ENCODE measurements at regions of chr11 and their contacts with region 1.

Region 1: DNA sequence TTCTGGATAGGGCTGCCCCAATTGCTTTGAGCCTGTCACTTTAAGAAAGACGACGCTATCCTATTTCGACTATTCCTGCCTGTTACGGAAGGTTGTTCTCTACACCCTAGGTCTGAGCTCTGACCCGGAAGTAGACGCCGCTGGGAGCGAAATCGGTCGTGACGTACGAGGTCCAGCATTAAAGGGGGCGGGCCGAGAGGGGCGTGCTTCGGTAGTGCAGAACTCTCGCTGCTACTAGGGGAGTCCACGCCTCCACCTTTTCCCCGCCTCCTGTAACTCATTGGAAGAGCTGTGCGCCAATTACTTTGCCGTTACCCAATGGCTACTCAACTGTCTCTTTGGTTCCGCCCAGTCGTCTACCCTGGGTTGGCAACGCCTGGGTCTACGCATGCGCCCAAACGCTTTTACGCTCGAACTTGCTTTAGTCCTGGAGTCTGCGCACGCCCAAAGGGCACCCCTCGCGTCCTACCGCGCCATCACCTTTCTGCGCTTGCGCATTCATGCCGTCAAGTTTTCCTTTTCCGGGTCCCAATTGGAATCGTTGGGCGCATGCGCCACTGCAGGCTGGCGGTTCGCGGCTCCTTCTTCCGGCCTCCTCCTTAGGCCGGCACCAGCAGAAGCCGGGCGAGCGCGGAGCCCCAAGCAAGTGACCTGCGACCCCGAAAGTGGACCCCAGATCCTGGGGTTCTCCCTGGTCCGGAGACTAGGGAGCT is at the start of gene PCNX3:
- DNase-seq: peak; percentile 95 to 100 (median 100)
- ATAC-seq: peak; percentile 92
- H3K4me3 ChIP-seq: peak within 1 kb of the TSS; percentile 89
- H3K4me3 Mint-ChIP-seq: peak within 1 kb of the TSS; percentile 94 to 99 (median 97)
- H3K27ac ChIP-seq: peak within 1 kb of the TSS; percentile 98
- H3K27ac Mint-ChIP-seq: peak within 1 kb of the TSS; percentile 90 to 99 (median 97)
- H3K4me1 ChIP-seq: peaks cover 42 to 45% of the 10 kb centered on the region in 2 donors
- H3K4me1 Mint-ChIP-seq: peaks cover 28 to 49% (median 39%) of the 10 kb centered on the region in 7 donors
- H3K27me3 ChIP-seq: no peaks in the 10 kb centered on the region
- H3K27me3 Mint-ChIP-seq: peaks cover 0 to 6% (median 0%) of the 10 kb centered on the region in 5 donors
- total RNA-seq, gene PCNX3: 50.4 to 64.9 (median 56.6) TPM

Region 2: GRCh38 chr11:64846998-64847666 is 768.3 kb before region 1 on chr11:
- CTCF ChIA-PET with region 1: no interaction called
- POLR2A ChIA-PET with region 1: no interaction called
- intact Hi-C with region 1: no loop called
- DNase-seq: peak; percentile 79 to 96 (median 89)
- ATAC-seq: peak; percentile 78
- H3K4me3 ChIP-seq: no peak overlapping the region
- H3K4me3 Mint-ChIP-seq: peak overlapping the region in 7 of 10 donors; percentile 14 to 55 (median 38)
- H3K27ac ChIP-seq: no peak overlapping the region
- H3K27ac Mint-ChIP-seq: peak overlapping the region; percentile 21 to 83 (median 72)
- H3K4me1 ChIP-seq: peaks cover 41 to 59% of the 10 kb centered on the region in 2 donors
- H3K4me1 Mint-ChIP-seq: peaks cover 40 to 68% (median 58%) of the 10 kb centered on the region in 7 donors
- H3K27me3 ChIP-seq: no peaks in the 10 kb centered on the region
- H3K27me3 Mint-ChIP-seq: no peaks in the 10 kb centered on the region

Region 3: GRCh38 chr11:65134386-65135253 is 480.8 kb before region 1 on chr11 and contains the start of gene SYVN1:
- CTCF ChIA-PET with region 1: no interaction called
- POLR2A ChIA-PET with region 1: no interaction called
- intact Hi-C with region 1: loop called (anchors 1 to 2 kb)
- DNase-seq: peak; percentile 88 to 95 (median 93)
- ATAC-seq: peak; percentile 90
- H3K4me3 ChIP-seq: peak within 1 kb of the TSS; percentile 90
- H3K4me3 Mint-ChIP-seq: peak within 1 kb of the TSS; percentile 89 to 100 (median 99)
- H3K27ac ChIP-seq: peak within 1 kb of the TSS; percentile 99
- H3K27ac Mint-ChIP-seq: peak within 1 kb of the TSS; percentile 97 to 100 (median 99)
- H3K4me1 ChIP-seq: peaks cover 10 to 21% of the 10 kb centered on the region in 2 donors
- H3K4me1 Mint-ChIP-seq: peaks cover 31 to 50% (median 40%) of the 10 kb centered on the region in 7 donors
- H3K27me3 ChIP-seq: no peaks in the 10 kb centered on the region
- H3K27me3 Mint-ChIP-seq: no peaks in the 10 kb centered on the region
- total RNA-seq, gene SYVN1: 61.0 to 84.6 (median 67.9) TPM

Region 4: GRCh38 chr11:65524741-65525545 is 90.4 kb before region 1 on chr11 and contains the start of gene SCYL1:
- CTCF ChIA-PET with region 1: no interaction called
- POLR2A ChIA-PET with region 1: interaction called, 27 read pairs
- intact Hi-C with region 1: loop called (anchors 1 kb)
- DNase-seq: peak; percentile 58 to 86 (median 77)
- ATAC-seq: peak; percentile 97
- H3K4me3 ChIP-seq: peak within 1 kb of the TSS; percentile 79
- H3K4me3 Mint-ChIP-seq: peak within 1 kb of the TSS; percentile 86 to 96 (median 90)
- H3K27ac ChIP-seq: peak within 1 kb of the TSS; percentile 96
- H3K27ac Mint-ChIP-seq: peak within 1 kb of the TSS; percentile 89 to 98 (median 95)
- H3K4me1 ChIP-seq: peaks cover 31 to 40% of the 10 kb centered on the region in 2 donors
- H3K4me1 Mint-ChIP-seq: peaks cover 32 to 66% (median 54%) of the 10 kb centered on the region in 7 donors
- H3K27me3 ChIP-seq: no peaks in the 10 kb centered on the region
- H3K27me3 Mint-ChIP-seq: no peaks in the 10 kb centered on the region
- total RNA-seq, gene SCYL1: 63.2 to 79.8 (median 70.4) TPM

Region 5: GRCh38 chr11:65593518-65594298 is 21.7 kb before region 1 on chr11:
- CTCF ChIA-PET with region 1: interaction called, 12 read pairs
- POLR2A ChIA-PET with region 1: interaction called, 6 read pairs
- intact Hi-C with region 1: loop called (anchors 1 to 2 kb)
- DNase-seq: peak in 2 of 9 donors; percentile 35 to 42
- ATAC-seq: peak; percentile 67
- H3K4me3 ChIP-seq: no peak overlapping the region
- H3K4me3 Mint-ChIP-seq: peak overlapping the region in 1 of 10 donors; percentile 9
- H3K27ac ChIP-seq: no peak overlapping the region
- H3K27ac Mint-ChIP-seq: peak overlapping the region in 4 of 9 donors; percentile 25 to 69 (median 40)
- H3K4me1 ChIP-seq: peaks cover 9 to 15% of the 10 kb centered on the region in 2 donors
- H3K4me1 Mint-ChIP-seq: peaks cover 4 to 26% (median 23%) of the 10 kb centered on the region in 7 donors
- H3K27me3 ChIP-seq: no peaks in the 10 kb centered on the region
- H3K27me3 Mint-ChIP-seq: no peaks in the 10 kb centered on the region

Region 6: DNA sequence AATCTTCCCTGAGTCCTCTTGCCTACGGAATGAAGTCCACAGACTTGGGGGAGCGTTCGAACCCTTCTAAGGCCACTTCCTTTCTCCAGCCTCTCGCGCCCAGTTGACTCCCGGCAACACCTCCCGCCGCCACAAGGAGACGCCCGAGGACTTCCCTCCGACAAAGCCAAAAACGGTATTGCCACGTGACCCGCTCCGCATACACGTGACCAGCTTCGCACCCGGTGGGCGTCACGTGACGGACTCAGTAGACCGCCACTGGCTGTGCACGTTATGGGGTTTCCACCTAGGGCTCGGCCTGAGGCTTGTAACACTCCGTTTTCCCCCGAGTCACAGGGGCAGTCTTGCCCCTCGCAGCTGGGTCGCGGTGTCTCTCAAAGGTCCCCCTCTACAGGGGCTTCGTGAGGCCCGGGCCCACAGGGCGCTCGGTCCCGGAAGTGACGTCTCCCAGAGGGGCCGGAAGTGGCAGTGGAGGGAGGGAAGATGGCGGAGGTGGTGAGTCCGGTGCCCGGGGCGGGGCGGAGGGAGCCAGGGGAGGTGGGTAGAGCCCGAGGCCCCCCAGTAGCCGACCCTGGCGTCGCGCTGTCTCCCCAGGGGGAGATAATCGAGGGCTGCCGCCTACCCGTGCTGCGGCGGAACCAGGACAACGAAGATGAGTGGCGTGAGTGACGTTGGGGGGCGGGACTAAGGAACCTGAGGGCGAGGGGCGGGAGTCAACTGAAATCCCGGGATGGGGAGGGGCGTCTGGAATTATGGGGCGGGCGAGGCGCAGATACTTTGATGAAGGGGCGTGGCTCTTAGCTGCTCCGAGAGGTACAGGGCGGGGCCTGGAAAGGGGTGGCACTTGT is 96.6 kb after region 1 on chr11 and contains the start of gene KAT5:
- CTCF ChIA-PET with region 1: interaction called, 7 read pairs
- POLR2A ChIA-PET with region 1: interaction called, 14 read pairs
- intact Hi-C with region 1: loop called in 1 of 2 experiments (anchors 1 kb)
- DNase-seq: peak; percentile 95 to 99 (median 98)
- ATAC-seq: peak; percentile 87
- H3K4me3 ChIP-seq: peak within 1 kb of the TSS; percentile 100
- H3K4me3 Mint-ChIP-seq: peak within 1 kb of the TSS; percentile 91 to 99 (median 95)
- H3K27ac ChIP-seq: peak within 1 kb of the TSS; percentile 95
- H3K27ac Mint-ChIP-seq: peak within 1 kb of the TSS; percentile 93 to 100 (median 99)
- H3K4me1 ChIP-seq: peaks cover 5 to 9% of the 10 kb centered on the region in 2 donors
- H3K4me1 Mint-ChIP-seq: peaks cover 12 to 41% (median 25%) of the 10 kb centered on the region in 7 donors
- H3K27me3 ChIP-seq: no peaks in the 10 kb centered on the region
- H3K27me3 Mint-ChIP-seq: peaks cover 0 to 5% (median 0%) of the 10 kb centered on the region in 5 donors
- total RNA-seq, gene KAT5: 68.6 to 133 (median 113) TPM

Region 7: DNA sequence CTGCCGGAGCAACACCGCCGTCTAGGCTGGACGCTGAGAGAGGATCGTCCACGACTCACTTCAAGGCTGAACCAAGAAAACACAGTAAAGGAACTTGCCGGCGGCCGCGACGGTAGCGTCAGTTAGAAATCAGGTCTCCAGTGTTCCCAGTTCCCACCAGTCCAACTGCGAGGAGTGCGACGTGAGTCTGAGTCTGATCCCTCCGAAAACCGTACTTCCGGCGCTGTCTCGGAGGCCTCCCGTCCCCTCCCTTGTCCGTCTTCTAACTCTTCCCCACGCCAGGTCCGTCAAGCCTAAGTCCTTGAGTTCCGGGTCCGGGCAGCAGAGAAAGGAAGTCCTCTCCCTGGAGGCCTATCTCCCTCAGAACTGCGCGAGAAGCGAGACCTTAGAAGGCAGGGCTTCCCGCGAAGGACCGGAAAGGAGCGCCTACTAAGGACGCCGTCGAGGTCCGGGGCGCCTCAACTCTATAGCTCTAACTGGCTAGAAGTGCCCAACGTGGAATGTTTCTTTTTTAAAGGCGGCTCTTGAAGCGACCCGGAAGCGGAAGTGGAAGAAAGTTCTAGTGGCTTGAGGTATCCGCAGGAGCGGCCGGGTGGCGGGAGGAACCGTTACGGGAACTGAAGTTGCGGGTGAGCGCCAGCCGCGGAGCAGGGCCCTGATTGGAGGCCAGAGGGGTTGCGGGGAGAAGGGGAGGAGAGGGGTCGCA is 386.7 kb after region 1 on chr11 and contains the starts of genes BANF1 and EIF1AD:
- CTCF ChIA-PET with region 1: no interaction called
- POLR2A ChIA-PET with region 1: interaction called, 5 read pairs
- intact Hi-C with region 1: loop called in 1 of 2 experiments (anchors 1 kb)
- DNase-seq: peak; percentile 75 to 96 (median 94)
- ATAC-seq: peak; percentile 92
- H3K4me3 ChIP-seq: peak within 1 kb of the TSS; percentile 100
- H3K4me3 Mint-ChIP-seq: peak within 1 kb of the TSS; percentile 97 to 100 (median 99)
- H3K27ac ChIP-seq: peak within 1 kb of the TSS; percentile 92
- H3K27ac Mint-ChIP-seq: peak within 1 kb of the TSS; percentile 96 to 100 (median 98)
- H3K4me1 ChIP-seq: peaks cover 8 to 14% of the 10 kb centered on the region in 2 donors
- H3K4me1 Mint-ChIP-seq: peaks cover 21 to 58% (median 52%) of the 10 kb centered on the region in 7 donors
- H3K27me3 ChIP-seq: no peaks in the 10 kb centered on the region
- H3K27me3 Mint-ChIP-seq: no peaks in the 10 kb centered on the region
- total RNA-seq, gene BANF1: 54.5 to 234 (median 99.4) TPM
- total RNA-seq, gene EIF1AD: 49.9 to 114 (median 66.7) TPM